Heart right ventricle (tissue), 16 donors: ENCODE measurements at regions of chr22 and their contacts with region 1.

Region 1: DNA sequence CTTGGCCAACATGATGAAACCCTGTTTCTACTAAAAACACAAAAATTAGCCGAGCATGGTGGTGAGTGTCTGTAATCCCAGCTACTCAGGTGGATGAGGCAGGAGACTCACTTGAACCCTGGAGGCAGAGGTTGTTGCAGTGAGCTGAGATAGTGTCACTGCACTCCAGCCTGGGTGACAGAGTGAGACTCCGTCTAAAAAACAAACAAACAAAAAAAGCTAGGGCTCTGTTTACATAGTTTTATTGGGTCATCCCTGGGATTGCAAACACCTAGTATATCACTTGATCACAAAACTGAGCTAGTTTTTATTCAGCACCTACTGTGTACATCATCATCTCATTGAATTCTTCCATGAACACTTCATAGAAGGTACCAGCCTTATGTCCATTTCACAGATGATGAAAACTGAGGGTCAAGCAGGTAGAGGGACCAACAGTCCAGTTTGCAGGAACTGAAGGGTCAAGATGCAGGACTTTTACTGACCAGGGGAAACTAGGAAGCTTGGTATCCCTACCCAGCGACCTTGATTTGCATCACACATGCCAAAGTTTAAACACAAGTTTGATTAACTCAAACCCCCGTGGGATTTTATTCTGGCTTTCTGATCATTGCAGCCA is 9.2 kb upstream of the MRTFA start:
- DNase-seq: no peak
- ATAC-seq: peak in 2 of 8 donors; percentile 3 to 5
- H3K4me3 ChIP-seq: no peak overlapping the region
- H3K27ac ChIP-seq: peak overlapping the region in 2 of 10 donors; percentile 37 to 60
- H3K4me1 ChIP-seq: peaks cover 0 to 11% (median 0%) of the 10 kb centered on the region in 9 donors
- H3K27me3 ChIP-seq: no peaks in the 10 kb centered on the region
- CTCF ChIP-seq: no peak

Region 2: DNA sequence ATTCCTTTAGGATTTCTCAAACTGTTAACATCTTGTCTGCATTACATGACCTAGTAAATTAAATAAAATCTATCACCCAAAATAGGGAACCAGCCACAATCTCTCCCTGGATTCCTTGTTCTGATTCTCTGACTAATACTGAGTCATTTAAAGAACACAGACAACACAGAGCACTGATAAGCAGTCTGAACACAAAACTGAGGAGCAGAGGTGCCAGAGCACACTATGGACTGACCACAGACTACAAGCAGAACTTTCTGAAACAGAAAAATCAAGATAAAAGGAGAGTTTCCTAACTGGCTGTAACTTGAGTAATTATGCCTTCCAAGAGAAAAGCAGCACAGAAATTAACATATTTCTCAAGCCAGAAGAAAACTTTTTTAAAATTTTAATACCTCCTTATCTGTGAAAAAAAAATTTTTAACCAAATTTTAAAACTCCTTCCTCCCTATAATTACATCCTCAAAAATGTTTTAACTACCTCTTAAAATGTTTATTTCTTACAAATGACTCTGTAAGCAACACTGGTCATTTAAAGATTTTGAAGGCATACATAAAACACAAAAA is 146.4 kb before region 1 on chr22:
- intact Hi-C with region 1: no loop called
- DNase-seq: no peak
- ATAC-seq: peak; percentile 51 to 98 (median 92)
- H3K4me3 ChIP-seq: no peak overlapping the region
- H3K27ac ChIP-seq: peak overlapping the region in 9 of 10 donors; percentile 6 to 75 (median 22)
- H3K4me1 ChIP-seq: peaks cover 6 to 47% (median 32%) of the 10 kb centered on the region in 9 donors
- H3K27me3 ChIP-seq: no peaks in the 10 kb centered on the region
- CTCF ChIP-seq: no peak

Region 3: GRCh38 chr22:40509401-40510134 is 136.1 kb before region 1 on chr22:
- intact Hi-C with region 1: loop called in 1 of 10 experiments (anchors 5 kb)
- DNase-seq: peak in 1 of 2 donors; percentile 78
- ATAC-seq: peak; percentile 68 to 89 (median 80)
- H3K4me3 ChIP-seq: no peak overlapping the region
- H3K27ac ChIP-seq: peak overlapping the region; percentile 43 to 90 (median 83)
- H3K4me1 ChIP-seq: peaks cover 23 to 89% (median 65%) of the 10 kb centered on the region in 9 donors
- H3K27me3 ChIP-seq: no peaks in the 10 kb centered on the region
- CTCF ChIP-seq: no peak

Region 4: GRCh38 chr22:40552070-40552469 is 93.6 kb before region 1 on chr22:
- intact Hi-C with region 1: loop called in 6 of 10 experiments (anchors 2 to 10 kb)
- DNase-seq: peak; percentile 75 to 78
- ATAC-seq: peak; percentile 73 to 96 (median 87)
- H3K4me3 ChIP-seq: no peak overlapping the region
- H3K27ac ChIP-seq: no peak overlapping the region
- H3K4me1 ChIP-seq: peaks cover 0 to 21% (median 10%) of the 10 kb centered on the region in 9 donors
- H3K27me3 ChIP-seq: no peaks in the 10 kb centered on the region
- CTCF ChIP-seq: peak; percentile 12 to 67 (median 39)